CD4-positive, alpha-beta T cell (primary cell): ENCODE measurements at regions of chr19 and their contacts with region 1.

Region 1: DNA sequence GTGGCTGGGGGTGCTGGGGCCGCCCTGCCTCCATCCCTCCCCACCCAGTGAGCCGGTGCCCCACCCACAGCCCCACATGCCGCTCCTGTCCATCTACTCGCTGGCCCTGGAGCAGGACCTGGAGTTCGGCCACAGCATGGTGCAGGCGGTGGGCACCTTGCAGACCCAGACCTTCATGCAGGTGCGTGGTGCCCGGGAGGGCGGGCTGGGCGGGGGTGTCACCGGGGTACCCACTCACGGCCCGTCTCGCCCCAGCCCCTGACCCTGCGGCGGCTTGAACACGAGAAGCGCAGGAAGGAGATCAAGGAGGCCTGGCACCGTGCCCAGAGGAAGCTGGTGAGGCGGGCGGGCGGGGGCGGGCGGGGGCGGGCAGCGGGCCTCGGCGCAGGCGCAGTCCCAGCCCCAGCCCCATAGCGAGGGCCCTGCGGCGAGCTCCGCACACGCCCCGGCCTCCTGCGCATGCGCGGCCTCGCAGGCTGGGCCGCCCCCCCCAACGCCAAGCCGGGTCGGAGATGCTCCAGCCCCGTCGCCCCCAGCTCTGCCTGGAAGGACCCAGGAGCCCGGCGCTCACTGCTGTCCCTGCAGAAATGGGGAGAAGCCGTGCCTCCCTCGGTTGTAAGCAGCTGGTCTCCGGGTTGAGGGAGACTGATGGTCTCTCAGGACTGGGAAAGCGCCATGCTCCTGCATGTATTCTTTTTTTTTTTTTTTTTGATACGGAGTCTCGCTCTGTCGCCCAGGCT is 7.7 kb downstream of the ARHGAP45 start:
- DNase-seq: peak; percentile 95 to 100 (median 97)
- ATAC-seq: peak; percentile 25
- H3K4me3 ChIP-seq: peak overlapping the region; percentile 48
- H3K4me3 Mint-ChIP-seq: peak overlapping the region; percentile 87
- H3K27ac ChIP-seq: peak overlapping the region; percentile 52 to 96
- H3K27ac Mint-ChIP-seq: peak overlapping the region; percentile 98
- H3K4me1 ChIP-seq: peaks cover 89% of the 10 kb centered on the region
- H3K4me1 Mint-ChIP-seq: peaks cover 53% of the 10 kb centered on the region
- H3K27me3 ChIP-seq: no peaks in the 10 kb centered on the region
- H3K27me3 Mint-ChIP-seq: peaks cover 4% of the 10 kb centered on the region
- CTCF ChIP-seq: no peak

Region 2: DNA sequence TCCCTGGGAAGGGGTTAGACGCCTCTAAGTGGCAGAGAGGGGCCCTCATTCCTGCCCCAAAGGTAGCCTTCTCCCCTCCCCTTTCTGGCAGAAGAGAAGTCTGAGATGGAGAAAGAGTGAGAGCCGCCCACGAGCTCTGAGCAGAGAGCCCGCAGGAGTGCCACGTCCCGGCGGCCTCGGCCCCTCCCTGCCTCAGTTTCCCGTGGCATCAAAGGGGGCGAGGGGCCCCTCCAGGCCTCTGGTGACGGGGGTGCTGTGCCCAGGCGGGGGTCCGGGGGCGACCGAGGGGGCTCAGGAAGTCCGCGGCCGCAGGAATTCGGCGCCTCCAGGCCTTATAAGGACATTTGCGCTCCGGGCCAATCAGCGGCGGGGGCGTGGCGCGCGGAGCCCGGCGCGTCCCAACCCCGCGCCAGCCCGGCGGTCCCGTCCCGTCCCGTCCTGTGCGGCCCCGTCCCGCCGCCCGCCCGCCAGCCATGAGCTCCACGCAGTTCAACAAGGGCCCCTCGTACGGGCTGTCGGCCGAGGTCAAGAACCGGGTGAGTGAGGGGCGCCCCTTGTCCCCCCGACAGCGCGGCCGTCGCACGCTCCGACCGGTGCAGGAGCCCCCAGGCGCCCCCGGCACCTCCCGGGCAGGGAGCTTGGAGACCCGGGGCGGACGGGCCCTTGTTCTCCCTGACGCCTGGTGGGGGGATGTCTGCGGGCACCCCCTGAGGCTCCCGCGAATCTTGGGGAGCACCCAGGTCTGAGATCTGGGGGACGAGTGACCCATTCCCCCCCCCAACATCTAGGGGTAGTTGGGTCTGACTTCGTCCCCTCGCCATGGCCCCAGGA is 48.3 kb before region 1 on chr19 and contains the start of gene CNN2:
- CTCF ChIA-PET with region 1: interaction called, 4 read pairs
- POLR2A ChIA-PET with region 1: interaction called, 186 read pairs
- intact Hi-C with region 1: loop called (anchors 2 kb)
- DNase-seq: peak in 11 of 14 experiments; percentile 47 to 83 (median 66)
- ATAC-seq: peak; percentile 16
- H3K4me3 ChIP-seq: peak within 1 kb of the TSS; percentile 99
- H3K4me3 Mint-ChIP-seq: peak within 1 kb of the TSS; percentile 99
- H3K27ac ChIP-seq: peak within 1 kb of the TSS; percentile 73 to 85
- H3K27ac Mint-ChIP-seq: peak within 1 kb of the TSS; percentile 93
- H3K4me1 ChIP-seq: peaks cover 50% of the 10 kb centered on the region
- H3K4me1 Mint-ChIP-seq: peaks cover 24% of the 10 kb centered on the region
- H3K27me3 ChIP-seq: no peaks in the 10 kb centered on the region
- H3K27me3 Mint-ChIP-seq: peaks cover 3% of the 10 kb centered on the region
- CTCF ChIP-seq: no peak
- total RNA-seq, gene CNN2: 307 to 318 TPM

Region 3: GRCh38 chr19:1039646-1040475 is 34.9 kb before region 1 on chr19 and contains the start of gene ABCA7:
- CTCF ChIA-PET with region 1: interaction called, 3 read pairs
- POLR2A ChIA-PET with region 1: interaction called, 154 read pairs
- intact Hi-C with region 1: loop called in 1 of 2 experiments (anchors 2 kb)
- DNase-seq: peak; percentile 99 to 100 (median 99)
- ATAC-seq: peak; percentile 90
- H3K4me3 ChIP-seq: peak within 1 kb of the TSS; percentile 91
- H3K4me3 Mint-ChIP-seq: peak within 1 kb of the TSS; percentile 100
- H3K27ac ChIP-seq: peak within 1 kb of the TSS; percentile 43 to 51
- H3K27ac Mint-ChIP-seq: peak within 1 kb of the TSS; percentile 92
- H3K4me1 ChIP-seq: peaks cover 81% of the 10 kb centered on the region
- H3K4me1 Mint-ChIP-seq: peaks cover 51% of the 10 kb centered on the region
- H3K27me3 ChIP-seq: no peaks in the 10 kb centered on the region
- H3K27me3 Mint-ChIP-seq: no peaks in the 10 kb centered on the region
- CTCF ChIP-seq: no peak
- total RNA-seq, gene ABCA7: 114 to 118 TPM

Region 4: DNA sequence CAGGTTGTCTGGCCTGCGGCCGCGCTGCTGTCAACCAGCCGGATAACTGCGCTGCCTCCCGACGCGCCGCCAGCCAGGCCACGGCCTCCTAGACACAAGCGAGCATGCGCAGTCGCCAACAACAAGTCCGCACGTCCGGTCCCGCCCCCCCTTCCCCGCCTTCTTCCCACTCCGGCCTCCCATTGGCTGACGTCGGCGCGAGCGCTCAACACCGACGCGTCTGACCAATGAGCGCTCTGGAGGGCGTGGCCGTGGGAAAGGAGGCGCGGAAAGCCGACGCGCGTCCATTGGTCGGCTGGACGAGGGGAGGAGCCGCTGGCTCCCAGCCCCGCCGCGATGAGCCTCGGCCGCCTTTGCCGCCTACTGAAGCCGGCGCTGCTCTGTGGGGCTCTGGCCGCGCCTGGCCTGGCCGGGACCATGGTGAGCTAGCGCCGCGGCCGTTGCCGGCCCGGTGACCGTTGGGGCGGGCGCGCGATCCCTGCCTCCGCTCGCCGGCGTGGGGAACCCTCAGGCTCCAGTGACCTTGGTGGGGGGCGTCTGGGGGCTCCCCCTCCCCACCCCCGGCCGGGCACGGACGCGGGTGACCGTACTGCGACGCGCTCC is 29.1 kb after region 1 on chr19 and contains the start of gene GPX4:
- CTCF ChIA-PET with region 1: interaction called, 3 read pairs
- POLR2A ChIA-PET with region 1: interaction called, 20 read pairs
- intact Hi-C with region 1: loop called (anchors 5 kb)
- DNase-seq: peak; percentile 97 to 100 (median 98)
- ATAC-seq: peak; percentile 89
- H3K4me3 ChIP-seq: peak within 1 kb of the TSS; percentile 76
- H3K4me3 Mint-ChIP-seq: peak within 1 kb of the TSS; percentile 89
- H3K27ac ChIP-seq: peak within 1 kb of the TSS; percentile 69 to 96
- H3K27ac Mint-ChIP-seq: peak within 1 kb of the TSS; percentile 95
- H3K4me1 ChIP-seq: peaks cover 62% of the 10 kb centered on the region
- H3K4me1 Mint-ChIP-seq: peaks cover 31% of the 10 kb centered on the region
- H3K27me3 ChIP-seq: no peaks in the 10 kb centered on the region
- H3K27me3 Mint-ChIP-seq: no peaks in the 10 kb centered on the region
- CTCF ChIP-seq: no peak
- total RNA-seq, gene GPX4: 174 to 175 TPM

Region 5: DNA sequence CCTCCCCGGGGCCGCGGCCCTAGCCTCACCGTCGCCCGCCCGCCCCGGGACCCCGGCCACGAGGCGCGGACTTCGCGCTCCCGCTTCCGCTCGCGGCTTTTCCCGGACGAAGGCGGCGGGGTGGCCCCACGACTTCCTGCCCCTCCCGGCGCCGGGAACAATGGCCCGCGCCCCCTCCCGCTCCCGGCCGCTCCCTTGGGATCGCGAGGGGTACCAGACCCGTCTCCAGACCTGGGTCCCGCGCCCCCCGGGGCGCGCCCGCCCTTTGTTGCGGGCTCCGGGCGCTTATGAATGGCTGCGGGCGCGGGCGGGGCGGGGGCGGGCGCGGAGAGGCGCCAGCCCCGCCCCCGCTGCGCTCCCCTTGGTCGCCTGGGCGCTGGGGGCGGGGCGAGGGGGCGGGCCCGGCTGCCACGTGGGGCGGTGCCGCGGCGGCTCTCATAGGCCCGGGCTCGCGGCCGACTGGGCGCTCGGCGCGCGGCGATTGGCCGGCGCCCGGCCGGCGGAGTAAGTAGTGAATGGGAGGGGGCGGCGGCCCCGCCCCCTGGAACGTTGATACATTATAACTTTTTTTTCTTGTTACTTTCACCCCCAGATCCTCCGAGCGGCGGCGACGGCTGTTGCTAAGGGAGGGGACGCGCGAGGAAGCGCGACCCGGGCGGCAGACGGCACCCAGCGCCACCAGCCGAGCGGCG is 174.7 kb after region 1 on chr19:
- CTCF ChIA-PET with region 1: interaction called, 8 read pairs
- POLR2A ChIA-PET with region 1: interaction called, 6 read pairs
- intact Hi-C with region 1: loop called in 1 of 2 experiments (anchors 5 kb)
- DNase-seq: peak; percentile 90 to 99 (median 96)
- ATAC-seq: peak; percentile 55
- H3K4me3 ChIP-seq: peak overlapping the region; percentile 71
- H3K4me3 Mint-ChIP-seq: peak overlapping the region; percentile 97
- H3K27ac ChIP-seq: peak overlapping the region; percentile 69 to 86
- H3K27ac Mint-ChIP-seq: peak overlapping the region; percentile 92
- H3K4me1 ChIP-seq: peaks cover 55% of the 10 kb centered on the region
- H3K4me1 Mint-ChIP-seq: peaks cover 10% of the 10 kb centered on the region
- H3K27me3 ChIP-seq: no peaks in the 10 kb centered on the region
- H3K27me3 Mint-ChIP-seq: no peaks in the 10 kb centered on the region
- CTCF ChIP-seq: no peak